T-cell (primary cell): ENCODE measurements at regions of chr9 and their contacts with region 1.

Region 1: DNA sequence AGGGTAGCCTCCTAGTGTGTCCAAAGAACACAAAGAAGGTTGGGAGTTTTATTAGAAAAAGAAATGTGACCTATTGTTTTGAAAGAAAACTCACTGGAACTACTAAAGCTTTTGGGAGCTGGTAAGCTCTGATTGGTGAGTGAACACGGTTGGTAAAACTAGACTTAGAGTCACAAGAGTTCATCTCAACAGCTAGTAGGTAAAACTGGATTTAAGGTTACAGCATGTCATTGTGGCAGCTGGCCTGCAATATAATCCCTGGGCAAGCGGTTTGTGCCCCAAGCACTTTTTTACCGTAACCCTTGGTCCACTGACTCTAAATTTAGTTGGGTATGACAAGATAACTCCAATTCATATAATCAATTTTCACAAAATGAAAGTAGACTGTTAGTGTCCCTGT is 47.4 kb downstream of the UBAP2 start:
- DNase-seq: no peak
- ATAC-seq: no peak
- H3K4me3 ChIP-seq: no peak overlapping the region
- H3K4me3 Mint-ChIP-seq: no peak overlapping the region
- H3K27ac ChIP-seq: no peak overlapping the region
- H3K27ac Mint-ChIP-seq: peak overlapping the region in 1 of 2 donors; percentile 62
- H3K4me1 ChIP-seq: no peaks in the 10 kb centered on the region
- H3K4me1 Mint-ChIP-seq: peaks cover 0 to 7% (median 2%) of the 10 kb centered on the region in 3 donors
- H3K27me3 ChIP-seq: no peaks in the 10 kb centered on the region
- H3K27me3 Mint-ChIP-seq: no peaks in the 10 kb centered on the region

Region 2: DNA sequence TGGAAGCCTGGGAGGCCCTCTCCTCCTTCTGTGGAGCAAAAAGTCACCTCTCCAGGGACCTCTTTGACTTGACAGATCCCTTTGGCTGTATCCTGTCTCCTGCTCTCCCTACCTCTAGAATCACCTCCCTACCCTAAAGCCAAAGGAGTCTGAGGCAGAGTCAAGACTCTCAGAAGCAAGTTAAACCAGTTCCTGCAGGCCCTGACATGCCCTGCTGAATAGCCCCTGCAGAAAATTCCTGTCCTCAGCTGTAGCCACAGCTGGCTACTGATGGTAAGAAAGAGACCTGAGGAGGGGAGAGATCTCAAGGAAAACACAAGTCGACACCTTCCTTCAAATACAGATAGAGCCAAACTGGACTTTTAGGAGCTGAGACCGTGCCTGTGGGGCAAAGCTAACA is 71.1 kb after region 1 on chr9:
- CTCF ChIA-PET with region 1: no interaction called
- POLR2A ChIA-PET with region 1: interaction called in 1 of 2 experiments, 13 read pairs
- DNase-seq: no peak
- ATAC-seq: no peak
- H3K4me3 ChIP-seq: no peak overlapping the region
- H3K4me3 Mint-ChIP-seq: no peak overlapping the region
- H3K27ac ChIP-seq: no peak overlapping the region
- H3K27ac Mint-ChIP-seq: no peak overlapping the region
- H3K4me1 ChIP-seq: peaks cover 0 to 9% of the 10 kb centered on the region in 2 experiments
- H3K4me1 Mint-ChIP-seq: peaks cover 0 to 5% (median 1%) of the 10 kb centered on the region in 3 donors
- H3K27me3 ChIP-seq: no peaks in the 10 kb centered on the region
- H3K27me3 Mint-ChIP-seq: no peaks in the 10 kb centered on the region

Region 3: GRCh38 chr9:34126207-34127034 is 125.1 kb after region 1 on chr9 and contains the start of gene DCAF12:
- CTCF ChIA-PET with region 1: no interaction called
- POLR2A ChIA-PET with region 1: no interaction called
- DNase-seq: peak; percentile 78 to 96 (median 87)
- ATAC-seq: peak; percentile 95 to 97 (median 95)
- H3K4me3 ChIP-seq: peak within 1 kb of the TSS; percentile 85 to 88
- H3K4me3 Mint-ChIP-seq: peak within 1 kb of the TSS; percentile 97 to 98 (median 98)
- H3K27ac ChIP-seq: peak within 1 kb of the TSS; percentile 89
- H3K27ac Mint-ChIP-seq: peak within 1 kb of the TSS; percentile 94 to 97
- H3K4me1 ChIP-seq: peaks cover 26 to 32% of the 10 kb centered on the region in 2 experiments
- H3K4me1 Mint-ChIP-seq: peaks cover 42 to 56% (median 51%) of the 10 kb centered on the region in 3 donors
- H3K27me3 ChIP-seq: no peaks in the 10 kb centered on the region
- H3K27me3 Mint-ChIP-seq: no peaks in the 10 kb centered on the region
- total RNA-seq, gene DCAF12: 15.5 to 29.1 (median 23.3) TPM

Region 4: GRCh38 chr9:34206561-34206960 is 205.3 kb after region 1 on chr9:
- CTCF ChIA-PET with region 1: interaction called in 1 of 2 experiments, 10 read pairs
- POLR2A ChIA-PET with region 1: no interaction called
- DNase-seq: no peak
- ATAC-seq: no peak
- H3K4me3 ChIP-seq: no peak overlapping the region
- H3K4me3 Mint-ChIP-seq: no peak overlapping the region
- H3K27ac ChIP-seq: no peak overlapping the region
- H3K27ac Mint-ChIP-seq: no peak overlapping the region
- H3K4me1 ChIP-seq: peaks cover 1 to 8% of the 10 kb centered on the region in 2 experiments
- H3K4me1 Mint-ChIP-seq: peaks cover 55 to 64% (median 56%) of the 10 kb centered on the region in 3 donors
- H3K27me3 ChIP-seq: no peaks in the 10 kb centered on the region
- H3K27me3 Mint-ChIP-seq: no peaks in the 10 kb centered on the region